Heart left ventricle (tissue), 16 donors: ENCODE measurements at regions of chr1 and their contacts with region 1.

Region 1: DNA sequence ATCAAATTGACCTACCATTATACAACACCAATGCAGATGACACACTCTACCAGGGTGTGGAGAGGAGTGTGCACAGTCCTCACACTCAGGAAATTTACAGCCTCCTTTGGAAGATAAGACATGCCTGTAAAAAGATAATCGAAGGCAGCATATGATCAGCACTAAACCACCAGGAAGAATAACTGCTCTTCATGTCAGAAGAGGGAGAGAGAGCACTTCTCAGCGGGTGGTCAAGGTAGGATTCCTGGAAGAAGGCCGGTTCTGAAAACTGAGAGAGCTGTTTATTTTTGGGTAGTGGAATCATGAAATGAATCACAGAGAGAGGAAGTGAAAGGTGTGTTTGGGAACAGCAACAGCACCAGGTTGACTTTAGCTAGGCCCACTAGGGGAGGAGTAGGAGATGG is 14.0 kb upstream of the ZNF697 start:
- DNase-seq: no peak
- ATAC-seq: no peak
- H3K4me3 ChIP-seq: no peak overlapping the region
- H3K27ac ChIP-seq: no peak overlapping the region
- H3K4me1 ChIP-seq: peaks cover 0 to 10% (median 0%) of the 10 kb centered on the region in 12 donors
- H3K27me3 ChIP-seq: no peaks in the 10 kb centered on the region
- CTCF ChIP-seq: no peak
- POLR2A ChIP-seq: no peak

Region 2: DNA sequence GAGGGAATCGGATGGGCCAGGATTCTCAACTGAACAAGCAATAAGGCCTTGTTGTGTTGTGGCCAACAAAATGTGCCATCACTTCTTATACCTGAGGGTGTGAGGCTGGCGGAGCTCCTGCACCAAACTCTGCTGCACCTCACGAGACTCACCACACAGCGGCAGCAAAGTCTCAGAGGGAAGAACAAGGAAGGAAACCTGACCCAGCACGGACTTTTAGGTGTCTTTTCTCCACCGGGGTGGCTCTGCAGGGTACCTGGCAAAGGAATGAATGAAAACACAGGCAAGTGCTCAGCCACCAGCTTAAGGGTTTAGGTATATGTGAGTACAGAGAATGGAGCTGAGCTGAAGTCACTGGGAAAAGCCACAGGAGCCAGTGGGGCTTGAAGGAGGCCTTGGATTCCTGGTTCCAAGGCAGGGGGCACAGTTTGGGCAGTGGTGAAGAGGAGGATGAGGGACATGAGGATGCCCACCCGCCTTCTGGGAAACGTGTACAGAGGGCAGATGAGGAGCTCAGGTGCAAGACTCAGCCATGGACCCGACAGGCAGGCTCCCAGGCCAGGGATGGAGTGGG is 186.1 kb before region 1 on chr1:
- intact Hi-C with region 1: loop called in 1 of 10 experiments (anchors 10 kb)
- DNase-seq: peak in 3 of 5 donors; percentile 13 to 31 (median 26)
- ATAC-seq: peak; percentile 47 to 77 (median 61)
- H3K4me3 ChIP-seq: no peak overlapping the region
- H3K27ac ChIP-seq: no peak overlapping the region
- H3K4me1 ChIP-seq: no peaks in the 10 kb centered on the region
- H3K27me3 ChIP-seq: no peaks in the 10 kb centered on the region
- CTCF ChIP-seq: peak in 10 of 12 donors; percentile 23 to 61 (median 44)
- POLR2A ChIP-seq: no peak

Region 3: GRCh38 chr1:119613769-119614720 is 48.0 kb before region 1 on chr1:
- intact Hi-C with region 1: loop called (anchors 1 to 2 kb)
- DNase-seq: peak; percentile 82 to 88 (median 86)
- ATAC-seq: peak; percentile 84 to 94 (median 90)
- H3K4me3 ChIP-seq: no peak overlapping the region
- H3K27ac ChIP-seq: no peak overlapping the region
- H3K4me1 ChIP-seq: peaks cover 0 to 36% (median 14%) of the 10 kb centered on the region in 12 donors
- H3K27me3 ChIP-seq: no peaks in the 10 kb centered on the region
- CTCF ChIP-seq: peak; percentile 66 to 92 (median 88)
- POLR2A ChIP-seq: no peak